ENCODE measurements at regions of chr16 and their contacts with region 1.

Region 1: GRCh38 chr16:1772736-1773584 is at the starts of genes EME2 and MRPS34:
- DNase-seq: no peak
- ATAC-seq: peak; percentile 48
- H3K4me3 ChIP-seq: peak within 1 kb of the TSS; percentile 60 to 71
- H3K27ac ChIP-seq: peak within 1 kb of the TSS; percentile 95
- H3K4me1 ChIP-seq: peaks cover 44% of the 10 kb centered on the region
- H3K27me3 ChIP-seq: no peaks in the 10 kb centered on the region
- CTCF ChIP-seq: peak; percentile 94
- total RNA-seq, gene EME2: 53.4 TPM
- total RNA-seq, gene MRPS34: 187 TPM

Region 2: GRCh38 chr16:684067-684794 is 1088.7 kb before region 1 on chr16 and contains the start of gene JMJD8:
- CTCF ChIA-PET with region 1: no interaction called
- POLR2A ChIA-PET with region 1: no interaction called
- in situ Hi-C with region 1: no loop called
- intact Hi-C with region 1: loop called (anchors 10 kb)
- DNase-seq: no peak
- ATAC-seq: peak; percentile 73
- H3K4me3 ChIP-seq: peak within 1 kb of the TSS; percentile 66 to 71
- H3K27ac ChIP-seq: peak within 1 kb of the TSS; percentile 87
- H3K4me1 ChIP-seq: peaks cover 19% of the 10 kb centered on the region
- H3K27me3 ChIP-seq: no peaks in the 10 kb centered on the region
- CTCF ChIP-seq: no peak
- total RNA-seq, gene JMJD8: 73.9 TPM

Region 3: GRCh38 chr16:1826691-1827575 is 54.0 kb after region 1 on chr16 and contains the starts of genes FAHD1 and HAGH:
- CTCF ChIA-PET with region 1: interaction called, 17 read pairs
- POLR2A ChIA-PET with region 1: no interaction called
- in situ Hi-C with region 1: no loop called
- intact Hi-C with region 1: no loop called
- DNase-seq: peak; percentile 85
- ATAC-seq: peak; percentile 93
- H3K4me3 ChIP-seq: peak within 1 kb of the TSS; percentile 99 to 100
- H3K27ac ChIP-seq: peak within 1 kb of the TSS; percentile 96
- H3K4me1 ChIP-seq: peaks cover 17% of the 10 kb centered on the region
- H3K27me3 ChIP-seq: no peaks in the 10 kb centered on the region
- CTCF ChIP-seq: no peak
- total RNA-seq, gene FAHD1: 34.6 TPM
- total RNA-seq, gene HAGH: 58.9 TPM

Region 4: GRCh38 chr16:2056681-2057407 is 283.9 kb after region 1 on chr16:
- CTCF ChIA-PET with region 1: no interaction called
- POLR2A ChIA-PET with region 1: no interaction called
- in situ Hi-C with region 1: no loop called
- intact Hi-C with region 1: no loop called
- DNase-seq: no peak
- ATAC-seq: peak; percentile 84
- H3K4me3 ChIP-seq: no peak overlapping the region
- H3K27ac ChIP-seq: no peak overlapping the region
- H3K4me1 ChIP-seq: no peaks in the 10 kb centered on the region
- H3K27me3 ChIP-seq: no peaks in the 10 kb centered on the region
- CTCF ChIP-seq: no peak; the same call in 1 of the 2 replicates

Region 5: DNA sequence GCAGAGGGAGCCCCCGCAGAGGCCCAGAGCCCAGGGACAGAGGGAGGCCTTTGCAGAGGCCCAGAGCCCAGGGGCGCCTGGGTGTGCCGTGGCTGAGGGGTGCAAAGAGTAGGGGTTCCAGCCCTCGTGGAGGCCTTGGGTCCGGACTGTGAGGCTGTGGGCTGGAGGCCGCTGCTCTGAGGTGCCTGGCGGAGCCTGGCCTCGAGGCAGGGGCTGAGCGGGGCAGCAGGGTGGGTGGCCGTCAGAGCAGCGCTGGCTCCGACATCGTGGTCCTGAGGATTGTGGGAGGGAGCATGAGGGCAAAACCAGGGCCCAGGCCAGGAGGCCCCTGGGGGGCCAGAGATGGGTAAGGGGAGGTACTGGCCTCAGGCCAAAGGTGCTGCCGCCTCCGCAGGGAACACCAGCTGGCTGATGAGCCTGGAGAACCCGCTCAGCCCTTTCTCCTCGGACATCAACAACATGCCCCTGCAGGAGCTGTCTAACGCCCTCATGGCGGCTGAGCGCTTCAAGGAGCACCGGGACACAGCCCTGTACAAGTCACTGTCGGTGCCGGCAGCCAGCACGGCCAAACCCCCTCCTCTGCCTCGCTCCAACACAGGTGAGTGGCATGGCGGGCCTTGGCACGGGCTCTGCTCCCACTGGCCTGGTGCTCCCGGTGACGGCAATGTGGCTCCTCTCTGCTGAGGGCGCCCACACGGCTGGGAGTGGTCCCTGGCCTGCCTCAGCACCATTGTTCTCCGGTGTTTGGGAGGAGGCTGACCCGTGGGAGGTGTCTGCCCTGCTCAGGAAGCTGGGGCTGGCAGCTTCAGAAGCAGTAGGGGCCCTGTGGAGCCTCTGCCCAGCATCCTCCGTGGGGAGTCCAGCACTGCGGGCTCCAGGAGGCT is 308.5 kb after region 1 on chr16:
- CTCF ChIA-PET with region 1: interaction called, 10 read pairs
- POLR2A ChIA-PET with region 1: no interaction called
- in situ Hi-C with region 1: no loop called
- intact Hi-C with region 1: no loop called
- DNase-seq: no peak
- ATAC-seq: no peak
- H3K4me3 ChIP-seq: no peak overlapping the region
- H3K27ac ChIP-seq: no peak overlapping the region
- H3K4me1 ChIP-seq: 0 out of 2 replicates have a peak, but pooled peaks cover 5% of the 10 kb centered on the region
- H3K27me3 ChIP-seq: no peaks in the 10 kb centered on the region
- CTCF ChIP-seq: no peak